ENCODE measurements at regions of chr2 and their contacts with region 1.

Region 1: DNA sequence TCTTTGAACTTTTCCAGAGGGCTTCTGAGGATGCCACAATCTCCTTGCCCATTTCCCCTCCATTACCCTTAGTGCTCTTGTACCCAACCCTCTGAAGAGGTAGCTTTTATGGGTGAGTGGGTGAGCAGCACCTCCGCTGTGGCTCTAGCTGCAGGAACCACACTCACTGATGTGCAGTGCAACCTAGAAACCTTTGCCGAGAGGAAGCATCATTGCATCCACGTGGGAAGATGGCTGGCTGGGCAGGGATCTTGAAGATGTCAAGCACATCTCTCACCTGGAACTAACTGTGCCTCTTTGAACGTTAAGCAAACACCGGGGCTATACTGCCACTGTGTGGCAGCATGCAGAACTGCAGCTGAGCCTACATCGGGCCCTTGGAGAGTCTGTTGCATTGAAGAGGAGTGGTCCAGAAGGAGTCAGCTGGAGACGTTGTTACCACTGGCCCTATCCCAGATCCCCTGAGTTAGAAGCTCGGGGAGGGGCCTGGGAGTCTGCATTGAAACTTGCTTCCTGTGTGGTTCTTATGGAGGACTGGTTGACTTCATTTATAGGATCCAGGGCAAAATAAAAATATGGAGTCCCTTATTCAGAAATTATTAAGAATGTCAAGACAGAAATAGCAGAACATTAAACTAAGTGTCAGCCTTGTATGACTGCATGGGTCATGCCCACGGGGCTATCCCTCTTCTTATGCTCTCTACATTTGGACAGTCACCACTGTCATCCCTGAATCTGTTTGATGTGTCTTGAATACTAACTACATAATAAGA is 28.7 kb downstream of the IGFBP5 start:
- DNase-seq: peak; percentile 37 to 57 (median 54)
- H3K4me3 ChIP-seq: no peak overlapping the region
- H3K4me3 Mint-ChIP-seq: no peak overlapping the region
- H3K27ac ChIP-seq: no peak overlapping the region
- H3K27ac Mint-ChIP-seq: no peak overlapping the region
- H3K4me1 ChIP-seq: no peaks in the 10 kb centered on the region
- H3K4me1 Mint-ChIP-seq: no peaks in the 10 kb centered on the region
- H3K27me3 ChIP-seq: no peaks in the 10 kb centered on the region
- H3K27me3 Mint-ChIP-seq: peaks cover 7 to 9% (median 7%) of the 10 kb centered on the region in 3 donors
- CTCF ChIP-seq: peak; percentile 98

Region 2: GRCh38 chr2:216034065-216034464 is 632.6 kb before region 1 on chr2:
- intact Hi-C with region 1: loop called (anchors 5 to 10 kb)
- DNase-seq: peak; percentile 18 to 52 (median 47)
- H3K4me3 ChIP-seq: no peak overlapping the region
- H3K4me3 Mint-ChIP-seq: no peak overlapping the region
- H3K27ac ChIP-seq: no peak overlapping the region
- H3K27ac Mint-ChIP-seq: no peak overlapping the region
- H3K4me1 ChIP-seq: no peaks in the 10 kb centered on the region
- H3K4me1 Mint-ChIP-seq: no peaks in the 10 kb centered on the region
- H3K27me3 ChIP-seq: no peaks in the 10 kb centered on the region
- H3K27me3 Mint-ChIP-seq: no peaks in the 10 kb centered on the region
- CTCF ChIP-seq: peak; percentile 84

Region 3: GRCh38 chr2:216519154-216519762 is 147.4 kb before region 1 on chr2:
- intact Hi-C with region 1: loop called (anchors 1 to 2 kb)
- DNase-seq: peak; percentile 38 to 53 (median 52)
- H3K4me3 ChIP-seq: no peak overlapping the region
- H3K4me3 Mint-ChIP-seq: no peak overlapping the region
- H3K27ac ChIP-seq: no peak overlapping the region
- H3K27ac Mint-ChIP-seq: no peak overlapping the region
- H3K4me1 ChIP-seq: no peaks in the 10 kb centered on the region
- H3K4me1 Mint-ChIP-seq: no peaks in the 10 kb centered on the region
- H3K27me3 ChIP-seq: no peaks in the 10 kb centered on the region
- H3K27me3 Mint-ChIP-seq: peaks cover 0 to 2% (median 2%) of the 10 kb centered on the region in 3 donors
- CTCF ChIP-seq: peak; percentile 85

Region 4: GRCh38 chr2:217521820-217522219 is 855.2 kb after region 1 on chr2:
- intact Hi-C with region 1: no loop called
- DNase-seq: no peak
- H3K4me3 ChIP-seq: no peak overlapping the region
- H3K4me3 Mint-ChIP-seq: no peak overlapping the region
- H3K27ac ChIP-seq: no peak overlapping the region
- H3K27ac Mint-ChIP-seq: no peak overlapping the region
- H3K4me1 ChIP-seq: peaks cover 10 to 13% of the 10 kb centered on the region in 2 donors
- H3K4me1 Mint-ChIP-seq: peaks cover 19% of the 10 kb centered on the region
- H3K27me3 ChIP-seq: no peaks in the 10 kb centered on the region
- H3K27me3 Mint-ChIP-seq: peaks cover 0 to 9% (median 8%) of the 10 kb centered on the region in 3 donors
- CTCF ChIP-seq: no peak